ENCODE measurements at regions of chr11 and their contacts with region 1.

Region 1: DNA sequence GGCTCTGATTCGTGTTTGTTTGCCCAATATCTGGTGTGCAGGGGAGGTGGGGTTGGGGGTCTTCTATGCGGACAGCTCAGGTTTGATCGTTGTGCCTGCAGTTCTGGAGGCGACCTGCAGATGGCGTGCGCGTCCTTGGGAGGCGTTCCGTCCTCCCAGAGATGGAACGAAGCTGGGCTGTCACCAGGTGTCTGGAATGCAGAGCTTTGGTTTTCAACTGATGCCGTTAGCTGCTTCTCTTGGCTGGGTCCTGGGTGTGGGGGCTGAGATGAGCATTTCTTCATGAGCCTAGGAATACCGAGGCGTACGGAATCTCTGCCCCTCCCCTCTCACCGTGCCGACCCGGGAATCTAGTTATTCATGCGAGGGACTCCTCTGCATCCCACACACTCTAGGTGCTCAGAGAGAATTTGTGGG is 98.6 kb downstream of the CEP164 start:
- DNase-seq: peak; percentile 96
- ATAC-seq: peak; percentile 79
- H3K4me3 Mint-ChIP-seq: peak overlapping the region; percentile 16; the same call in 1 of the 2 replicates
- H3K27ac Mint-ChIP-seq: no peak overlapping the region
- H3K4me1 Mint-ChIP-seq: peaks cover 20% of the 10 kb centered on the region
- H3K27me3 Mint-ChIP-seq: peaks cover 3% of the 10 kb centered on the region; the same call in 1 of the 2 replicates
- CTCF ChIP-seq: peak; percentile 95

Region 2: GRCh38 chr11:117281159-117281558 is 145.1 kb before region 1 on chr11:
- CTCF ChIA-PET with region 1: no interaction called
- POLR2A ChIA-PET with region 1: no interaction called
- DNase-seq: no peak
- ATAC-seq: no peak
- H3K4me3 Mint-ChIP-seq: no peak overlapping the region
- H3K27ac Mint-ChIP-seq: no peak overlapping the region
- H3K4me1 Mint-ChIP-seq: no peaks in the 10 kb centered on the region
- H3K27me3 Mint-ChIP-seq: no peaks in the 10 kb centered on the region
- CTCF ChIP-seq: no peak

Region 3: DNA sequence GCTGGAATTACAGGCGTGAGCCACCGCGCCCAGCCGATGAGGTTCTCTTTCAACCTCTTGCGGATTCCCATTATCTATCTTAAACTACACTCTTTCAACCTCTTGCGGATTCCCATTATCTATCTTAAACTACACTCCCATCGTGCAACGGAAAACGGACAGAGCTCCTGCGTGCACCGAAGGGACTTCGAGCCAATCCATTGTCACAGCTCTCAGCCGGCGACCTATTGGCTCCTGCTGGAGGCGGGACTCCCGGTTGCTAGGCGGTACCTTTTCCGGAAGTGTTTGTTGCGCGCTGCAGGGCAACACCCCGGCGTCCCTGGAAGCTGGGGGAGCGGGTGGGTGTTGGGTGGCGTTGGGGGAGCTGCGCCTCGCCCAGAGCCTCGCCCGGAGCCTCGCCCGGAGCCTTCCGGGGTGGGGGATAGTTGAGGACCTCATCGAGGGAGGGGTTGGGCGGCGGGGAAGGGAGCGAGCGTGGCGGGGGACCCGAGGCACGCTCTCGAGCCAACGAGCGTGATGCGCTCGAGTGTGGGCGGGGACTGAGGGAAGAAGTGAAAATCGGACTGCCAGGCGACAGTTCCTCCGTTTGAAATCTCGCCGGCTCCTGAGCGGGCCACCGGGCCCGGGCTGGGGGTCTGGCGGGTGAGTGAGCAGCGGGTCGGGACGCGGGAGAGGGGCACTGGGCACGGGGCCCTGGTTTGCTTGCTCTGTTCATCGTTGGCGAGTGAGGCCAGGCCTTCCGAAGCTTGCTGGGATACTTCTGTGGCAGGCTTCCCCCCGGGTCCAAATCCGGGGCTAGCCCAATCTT is 98.5 kb before region 1 on chr11 and contains the start of gene CEP164:
- CTCF ChIA-PET with region 1: interaction called, 19 read pairs
- POLR2A ChIA-PET with region 1: no interaction called
- DNase-seq: peak; percentile 93
- ATAC-seq: peak; percentile 97
- H3K4me3 Mint-ChIP-seq: no peak within 1 kb of the TSS
- H3K27ac Mint-ChIP-seq: no peak within 1 kb of the TSS; the same call in 1 of the 2 replicates
- H3K4me1 Mint-ChIP-seq: no peaks in the 10 kb centered on the region
- H3K27me3 Mint-ChIP-seq: no peaks in the 10 kb centered on the region; the same call in 1 of the 2 replicates
- CTCF ChIP-seq: no peak
- total RNA-seq, gene CEP164: 21.0 to 23.5 TPM (median 21.8 TPM) in 3 replicates

Region 4: GRCh38 chr11:117449111-117449693 is 22.9 kb after region 1 on chr11:
- CTCF ChIA-PET with region 1: interaction called, 84 read pairs
- POLR2A ChIA-PET with region 1: no interaction called
- DNase-seq: no peak
- ATAC-seq: no peak
- H3K4me3 Mint-ChIP-seq: no peak overlapping the region
- H3K27ac Mint-ChIP-seq: no peak overlapping the region
- H3K4me1 Mint-ChIP-seq: no peaks in the 10 kb centered on the region; the same call in 1 of the 2 replicates
- H3K27me3 Mint-ChIP-seq: no peaks in the 10 kb centered on the region; the same call in none of the 2 replicates
- CTCF ChIP-seq: no peak

Region 5: DNA sequence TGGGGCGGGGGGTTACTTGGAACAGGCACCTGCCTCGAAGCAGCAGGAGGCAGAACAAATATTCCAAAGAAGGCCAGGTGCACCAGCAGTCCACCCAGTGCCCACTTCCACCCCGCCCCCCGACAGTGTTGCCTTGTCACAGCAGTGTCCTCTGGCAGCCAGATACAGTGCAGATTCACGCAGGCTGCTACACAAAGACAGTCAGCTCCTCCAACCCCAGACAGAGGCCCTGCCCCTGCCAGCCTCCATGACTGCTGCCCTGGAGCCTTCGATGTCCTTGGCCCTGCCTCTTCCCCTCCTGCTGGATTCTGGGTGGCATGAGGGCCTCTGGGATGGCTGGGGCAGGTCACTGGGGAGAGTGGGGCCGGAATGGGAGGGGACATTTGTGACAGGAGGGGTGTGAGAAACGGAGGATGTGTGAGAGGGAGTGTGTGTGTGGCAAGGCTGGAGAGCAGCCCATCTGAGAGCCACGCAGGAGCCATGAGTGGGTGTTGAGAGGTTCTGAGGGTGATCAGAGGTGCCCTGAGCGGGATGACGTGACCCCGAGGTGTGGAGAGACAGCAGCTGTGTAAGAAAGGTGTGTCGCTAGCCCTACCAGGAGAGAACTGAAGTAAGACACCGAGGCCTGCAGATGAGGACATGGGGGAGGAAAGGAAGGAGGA is 75.1 kb after region 1 on chr11:
- CTCF ChIA-PET with region 1: interaction called, 43 read pairs
- POLR2A ChIA-PET with region 1: no interaction called
- DNase-seq: no peak
- ATAC-seq: no peak
- H3K4me3 Mint-ChIP-seq: no peak overlapping the region
- H3K27ac Mint-ChIP-seq: peak overlapping the region; percentile 32; the same call in 1 of the 2 replicates
- H3K4me1 Mint-ChIP-seq: peaks cover 19% of the 10 kb centered on the region
- H3K27me3 Mint-ChIP-seq: no peaks in the 10 kb centered on the region
- CTCF ChIP-seq: no peak

Region 6: GRCh38 chr11:117560780-117561530 is 134.7 kb after region 1 on chr11:
- CTCF ChIA-PET with region 1: interaction called, 23 read pairs
- POLR2A ChIA-PET with region 1: no interaction called
- DNase-seq: no peak
- ATAC-seq: no peak
- H3K4me3 Mint-ChIP-seq: no peak overlapping the region
- H3K27ac Mint-ChIP-seq: no peak overlapping the region
- H3K4me1 Mint-ChIP-seq: peaks cover 27% of the 10 kb centered on the region
- H3K27me3 Mint-ChIP-seq: peaks cover 3% of the 10 kb centered on the region; the same call in 1 of the 2 replicates
- CTCF ChIP-seq: no peak

Region 7: GRCh38 chr11:117696540-117696939 is 270.3 kb after region 1 on chr11:
- CTCF ChIA-PET with region 1: interaction called, 15 read pairs
- POLR2A ChIA-PET with region 1: no interaction called
- DNase-seq: no peak
- ATAC-seq: peak; percentile 41
- H3K4me3 Mint-ChIP-seq: no peak overlapping the region
- H3K27ac Mint-ChIP-seq: no peak overlapping the region
- H3K4me1 Mint-ChIP-seq: peaks cover 4% of the 10 kb centered on the region; the same call in 1 of the 2 replicates
- H3K27me3 Mint-ChIP-seq: no peaks in the 10 kb centered on the region
- CTCF ChIP-seq: no peak

Region 8: DNA sequence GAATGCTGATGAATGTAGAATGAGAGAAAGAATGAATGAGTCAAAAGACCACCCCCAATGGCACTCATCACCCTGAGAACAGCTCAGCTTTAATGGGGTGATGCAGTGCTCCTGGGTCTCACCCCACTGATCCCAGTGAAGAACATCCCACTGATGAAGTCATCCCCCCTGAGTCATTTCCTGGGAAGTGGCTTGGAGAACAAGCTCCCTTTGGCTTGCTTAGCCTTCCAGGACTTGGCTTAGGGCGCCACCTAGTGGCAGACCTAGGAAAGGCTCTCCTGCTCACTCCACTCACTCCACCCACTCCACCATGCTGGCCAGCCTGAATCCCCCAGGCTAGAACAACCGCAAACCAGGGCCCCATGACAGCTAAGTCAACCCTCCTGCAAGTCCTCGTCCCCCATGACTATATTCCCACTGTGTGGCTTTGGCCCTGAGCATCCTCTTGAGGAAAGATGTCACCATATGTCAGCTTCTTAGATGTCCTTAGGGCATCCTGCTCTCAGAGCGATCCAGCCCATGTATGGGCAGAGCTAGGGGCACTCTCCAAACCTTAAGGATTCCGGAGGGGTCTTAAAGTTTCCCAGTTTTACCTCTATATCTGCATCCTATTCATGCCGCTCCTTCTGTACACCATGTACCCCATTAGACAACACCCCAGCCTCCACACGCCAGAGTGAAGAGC is 520.7 kb after region 1 on chr11:
- CTCF ChIA-PET with region 1: interaction called, 17 read pairs
- POLR2A ChIA-PET with region 1: no interaction called
- DNase-seq: peak; percentile 94
- ATAC-seq: peak; percentile 97
- H3K4me3 Mint-ChIP-seq: no peak overlapping the region
- H3K27ac Mint-ChIP-seq: 0 out of 2 replicates have a peak overlapping the region, but pooled peaks have one; percentile 28
- H3K4me1 Mint-ChIP-seq: no peaks in the 10 kb centered on the region
- H3K27me3 Mint-ChIP-seq: no peaks in the 10 kb centered on the region
- CTCF ChIP-seq: peak; percentile 96